Common myeloid progenitor, CD34-positive (primary cell): ENCODE measurements at regions of chr2 and their contacts with region 1.

Region 1: DNA sequence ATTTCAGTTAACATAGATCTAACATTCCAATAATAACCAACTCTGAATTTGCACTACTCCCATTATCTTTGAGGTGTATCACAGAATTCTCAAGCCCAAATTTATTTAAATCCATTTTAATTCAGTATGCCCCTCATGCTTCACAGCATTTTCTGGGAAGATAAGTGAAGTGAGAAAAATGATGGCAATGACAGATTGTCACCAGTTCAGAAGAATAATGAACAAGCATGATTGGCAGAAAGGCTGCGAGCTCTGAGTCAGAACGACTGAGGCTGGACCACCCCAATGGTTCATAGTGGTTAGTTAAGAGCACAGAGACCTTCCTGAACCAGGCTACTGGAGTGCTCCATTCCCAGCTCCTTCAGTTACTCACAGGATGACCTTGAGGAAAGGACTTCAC is 4.9 kb downstream of the SPRED2 start:
- DNase-seq: no peak
- H3K4me3 ChIP-seq: no peak overlapping the region
- H3K27ac ChIP-seq: no peak overlapping the region
- H3K4me1 ChIP-seq: peaks cover 0 to 14% (median 6%) of the 10 kb centered on the region in 4 experiments
- H3K27me3 ChIP-seq: no peaks in the 10 kb centered on the region

Region 2: DNA sequence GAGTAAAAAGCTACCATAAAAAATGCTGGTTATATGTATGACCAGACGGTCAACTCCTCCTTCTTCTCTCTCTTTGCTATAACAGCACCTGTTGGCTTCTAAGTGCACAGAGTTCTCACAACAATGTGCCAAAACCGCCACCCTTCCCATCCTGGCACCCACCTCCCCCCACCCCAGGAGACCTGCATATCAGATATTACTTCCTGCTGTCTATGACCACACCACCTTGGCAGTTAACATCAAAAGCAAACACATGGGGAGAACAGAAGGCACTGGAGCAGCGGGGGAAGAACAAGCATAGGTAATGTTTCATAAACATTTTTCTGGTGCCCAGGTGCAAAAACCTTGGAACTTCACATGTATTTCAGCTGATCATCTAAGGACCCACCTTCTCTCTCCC is 10.6 kb before region 1 on chr2:
- CTCF ChIA-PET with region 1: interaction called, 13 read pairs
- POLR2A ChIA-PET with region 1: interaction called, 6 read pairs
- DNase-seq: peak in 2 of 3 donors; percentile 20 to 40
- H3K4me3 ChIP-seq: no peak overlapping the region
- H3K27ac ChIP-seq: no peak overlapping the region
- H3K4me1 ChIP-seq: peaks cover 3 to 24% (median 13%) of the 10 kb centered on the region in 4 experiments
- H3K27me3 ChIP-seq: no peaks in the 10 kb centered on the region